Endothelial cell of umbilical vein (primary cell): ENCODE measurements at regions of chr1 and their contacts with region 1.

Region 1: DNA sequence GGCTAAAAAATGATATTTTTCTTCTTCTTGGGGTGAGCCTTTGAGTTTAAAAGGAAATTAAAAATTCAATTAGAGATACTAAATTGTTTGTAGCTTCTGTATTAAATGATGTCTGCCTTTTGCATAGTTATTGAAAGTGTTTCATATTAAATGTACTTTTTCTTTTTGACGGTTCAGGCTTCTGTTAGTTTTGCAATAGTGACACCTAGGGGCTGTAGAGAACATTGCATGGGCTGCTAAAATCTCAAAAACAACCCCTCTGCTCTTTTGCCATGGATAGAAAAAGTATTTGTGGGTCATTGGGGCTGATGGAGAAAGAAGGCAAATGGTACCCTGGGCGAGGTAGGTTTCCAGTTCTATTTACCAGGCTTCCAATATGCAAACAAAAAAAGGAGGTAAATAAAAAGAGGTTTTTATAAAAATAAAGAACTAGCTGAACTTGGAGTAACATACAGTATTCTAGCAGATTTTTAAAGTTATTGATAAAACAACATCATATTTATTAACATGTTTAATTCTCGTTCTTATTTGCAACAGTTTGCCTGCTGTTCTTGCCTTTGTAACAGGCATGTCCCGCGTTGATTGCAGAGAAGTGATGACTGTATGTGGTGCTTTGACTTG is 115.4 kb upstream of the HOOK1 start:
- DNase-seq: peak; percentile 62
- H3K4me3 ChIP-seq: no peak overlapping the region
- H3K27ac ChIP-seq: no peak overlapping the region
- H3K4me1 ChIP-seq: peaks cover 4% of the 10 kb centered on the region
- H3K27me3 ChIP-seq: no peaks in the 10 kb centered on the region
- CTCF ChIP-seq: peak; percentile 72 to 78
- POLR2A ChIP-seq: no peak

Region 2: GRCh38 chr1:58515794-58516401 is 1183.4 kb before region 1 on chr1:
- CTCF ChIA-PET with region 1: no interaction called
- POLR2A ChIA-PET with region 1: no interaction called
- dilution Hi-C with region 1: no loop called
- intact Hi-C with region 1: loop called (anchors 5 kb)
- DNase-seq: peak; percentile 71
- H3K4me3 ChIP-seq: no peak overlapping the region
- H3K27ac ChIP-seq: no peak overlapping the region
- H3K4me1 ChIP-seq: no peaks in the 10 kb centered on the region
- H3K27me3 ChIP-seq: no peaks in the 10 kb centered on the region
- CTCF ChIP-seq: peak; percentile 37 to 58
- POLR2A ChIP-seq: no peak

Region 3: GRCh38 chr1:58768971-58769808 is 930.1 kb before region 1 on chr1:
- CTCF ChIA-PET with region 1: interaction called, 25 read pairs
- POLR2A ChIA-PET with region 1: no interaction called
- dilution Hi-C with region 1: no loop called
- intact Hi-C with region 1: no loop called
- DNase-seq: peak; percentile 74
- H3K4me3 ChIP-seq: no peak overlapping the region
- H3K27ac ChIP-seq: no peak overlapping the region
- H3K4me1 ChIP-seq: peaks cover 34% of the 10 kb centered on the region
- H3K27me3 ChIP-seq: no peaks in the 10 kb centered on the region
- CTCF ChIP-seq: peak; percentile 71 to 81
- POLR2A ChIP-seq: no peak

Region 4: DNA sequence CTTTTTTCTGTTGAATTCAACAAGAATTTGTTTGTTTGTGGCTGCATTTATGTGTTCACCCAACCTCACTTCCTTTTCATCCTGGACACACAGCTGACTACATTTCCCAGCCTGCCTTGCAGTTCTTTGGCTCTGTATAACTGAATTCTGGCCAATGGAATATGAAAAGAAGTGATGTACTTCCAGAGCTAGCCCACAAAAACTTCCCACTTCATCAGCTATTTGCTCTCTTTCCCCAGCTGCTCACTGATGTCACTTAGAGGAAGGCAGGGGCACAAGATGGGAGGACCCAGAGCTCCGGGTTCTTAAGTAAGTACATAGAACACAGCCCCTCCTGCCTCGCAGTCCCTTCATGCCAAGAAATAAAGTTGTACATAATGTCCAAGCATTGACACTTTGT is 637.5 kb before region 1 on chr1:
- CTCF ChIA-PET with region 1: interaction called, 17 read pairs
- POLR2A ChIA-PET with region 1: no interaction called
- dilution Hi-C with region 1: no loop called
- intact Hi-C with region 1: no loop called
- DNase-seq: peak; percentile 94
- H3K4me3 ChIP-seq: peak overlapping the region in 2 of 3 experiments; percentile 1 to 62
- H3K27ac ChIP-seq: peak overlapping the region; percentile 75
- H3K4me1 ChIP-seq: peaks cover 26% of the 10 kb centered on the region
- H3K27me3 ChIP-seq: no peaks in the 10 kb centered on the region
- CTCF ChIP-seq: no peak
- POLR2A ChIP-seq: peak; percentile 47

Region 5: GRCh38 chr1:59083946-59084865 is 615.1 kb before region 1 on chr1:
- CTCF ChIA-PET with region 1: interaction called, 19 read pairs
- POLR2A ChIA-PET with region 1: no interaction called
- dilution Hi-C with region 1: no loop called
- intact Hi-C with region 1: no loop called
- DNase-seq: peak; percentile 67
- H3K4me3 ChIP-seq: no peak overlapping the region
- H3K27ac ChIP-seq: peak overlapping the region; percentile 49
- H3K4me1 ChIP-seq: peaks cover 23% of the 10 kb centered on the region
- H3K27me3 ChIP-seq: no peaks in the 10 kb centered on the region
- CTCF ChIP-seq: no peak
- POLR2A ChIP-seq: peak; percentile 20

Region 6: DNA sequence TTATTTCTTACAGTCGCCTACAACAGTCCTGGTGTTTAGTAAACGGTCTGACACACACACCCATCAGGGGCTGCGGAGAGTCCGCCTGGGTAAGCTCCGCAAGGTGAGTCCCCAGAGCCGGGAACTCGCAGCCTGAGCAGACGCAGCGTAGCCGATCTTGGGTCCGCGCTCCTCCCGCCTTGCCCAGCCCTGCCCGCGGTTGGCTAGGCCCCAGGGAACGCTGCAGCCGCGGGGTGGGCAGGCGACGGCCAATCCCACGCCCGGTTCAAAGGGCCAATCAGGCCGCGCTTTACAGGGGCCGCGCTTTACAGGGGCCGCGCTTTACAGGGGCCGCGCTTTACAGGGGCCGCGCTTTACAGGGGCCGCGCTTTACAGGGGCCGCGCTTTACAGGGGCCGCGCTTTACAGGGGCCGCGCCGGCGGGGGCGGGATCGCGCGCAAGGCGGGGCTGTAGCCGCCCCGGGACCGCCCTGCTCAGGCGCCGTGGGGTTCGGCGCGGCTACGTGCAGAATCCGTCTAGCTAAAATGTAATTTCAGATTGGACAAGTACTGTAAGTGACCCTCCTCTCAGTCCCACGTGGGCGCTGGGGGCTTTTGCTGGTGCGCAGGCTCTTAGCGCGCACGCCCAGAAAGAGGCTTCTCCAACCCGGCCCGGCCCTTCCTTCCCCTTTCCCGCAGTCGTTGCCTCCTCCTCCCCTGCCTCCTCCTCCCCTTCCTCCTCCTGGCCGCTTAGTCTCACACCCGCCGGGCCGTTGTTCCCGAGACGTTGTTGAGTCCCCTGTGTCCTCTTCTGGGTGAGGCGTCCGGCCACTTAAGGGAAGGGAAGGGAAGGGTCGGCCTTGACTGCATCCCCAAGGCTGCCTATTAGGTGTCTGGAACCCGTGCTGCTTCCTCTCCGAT is 402.7 kb before region 1 on chr1 and contains the start of gene FGGY:
- CTCF ChIA-PET with region 1: interaction called, 14 read pairs
- POLR2A ChIA-PET with region 1: no interaction called
- dilution Hi-C with region 1: no loop called
- intact Hi-C with region 1: loop called (anchors 1 kb)
- DNase-seq: peak; percentile 99
- H3K4me3 ChIP-seq: peak within 1 kb of the TSS; percentile 36 to 81 (median 64)
- H3K27ac ChIP-seq: peak within 1 kb of the TSS; percentile 92
- H3K4me1 ChIP-seq: peaks cover 30% of the 10 kb centered on the region
- H3K27me3 ChIP-seq: no peaks in the 10 kb centered on the region
- CTCF ChIP-seq: no peak
- POLR2A ChIP-seq: peak; percentile 95
- total RNA-seq, gene FGGY: 5.6 and 8.3 TPM in 2 replicates

Region 7: DNA sequence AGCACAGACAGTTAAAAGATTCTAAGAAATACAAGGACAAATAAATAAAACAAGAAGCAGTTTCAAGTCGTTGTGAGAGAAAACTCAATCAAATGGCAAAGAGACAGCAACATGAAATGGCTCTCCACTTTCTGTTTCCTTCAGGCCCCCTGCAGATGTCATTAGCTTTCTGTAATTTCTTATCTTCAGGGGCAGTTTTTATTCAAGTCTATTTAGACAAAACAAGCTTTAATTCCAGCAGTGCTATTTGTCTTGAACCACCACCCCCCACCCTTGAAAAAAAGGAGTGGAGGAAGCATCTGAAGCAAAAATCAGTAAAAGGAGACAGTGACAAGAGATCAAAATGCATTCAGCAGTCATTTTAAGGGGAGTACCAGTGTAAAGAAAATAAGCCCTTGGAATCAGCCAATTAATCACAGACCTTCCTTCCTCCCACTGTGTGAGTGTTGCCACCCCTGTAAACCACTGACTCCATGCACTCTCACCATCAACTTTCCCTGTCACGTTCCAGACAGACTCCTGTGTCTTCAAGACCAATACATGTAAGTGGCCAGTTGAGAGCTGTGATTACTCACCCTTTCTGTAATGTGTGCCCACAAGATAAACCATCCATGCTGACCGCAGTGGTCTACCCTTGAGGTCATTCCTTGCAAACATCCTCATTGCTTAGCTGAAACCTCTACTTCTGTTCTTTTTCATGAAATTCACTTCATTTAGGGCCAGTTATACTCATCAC is 20.7 kb before region 1 on chr1:
- CTCF ChIA-PET with region 1: interaction called, 20 read pairs
- POLR2A ChIA-PET with region 1: no interaction called
- dilution Hi-C with region 1: no loop called
- intact Hi-C with region 1: no loop called
- DNase-seq: peak; percentile 93
- H3K4me3 ChIP-seq: no peak overlapping the region
- H3K27ac ChIP-seq: peak overlapping the region; percentile 65
- H3K4me1 ChIP-seq: peaks cover 29% of the 10 kb centered on the region
- H3K27me3 ChIP-seq: no peaks in the 10 kb centered on the region
- CTCF ChIP-seq: no peak
- POLR2A ChIP-seq: peak; percentile 63